Panc1 (cell line): ENCODE measurements at regions of chr11 and their contacts with region 1.

Region 1: GRCh38 chr11:72598906-72599305 is 75.3 kb downstream of the PDE2A start:
- DNase-seq: no peak
- ATAC-seq: peak; percentile 89
- H3K4me3 ChIP-seq: no peak overlapping the region
- H3K27ac ChIP-seq: no peak overlapping the region
- H3K4me1 ChIP-seq: no peaks in the 10 kb centered on the region
- H3K27me3 ChIP-seq: no peaks in the 10 kb centered on the region
- CTCF ChIP-seq: peak; percentile 87

Region 2: DNA sequence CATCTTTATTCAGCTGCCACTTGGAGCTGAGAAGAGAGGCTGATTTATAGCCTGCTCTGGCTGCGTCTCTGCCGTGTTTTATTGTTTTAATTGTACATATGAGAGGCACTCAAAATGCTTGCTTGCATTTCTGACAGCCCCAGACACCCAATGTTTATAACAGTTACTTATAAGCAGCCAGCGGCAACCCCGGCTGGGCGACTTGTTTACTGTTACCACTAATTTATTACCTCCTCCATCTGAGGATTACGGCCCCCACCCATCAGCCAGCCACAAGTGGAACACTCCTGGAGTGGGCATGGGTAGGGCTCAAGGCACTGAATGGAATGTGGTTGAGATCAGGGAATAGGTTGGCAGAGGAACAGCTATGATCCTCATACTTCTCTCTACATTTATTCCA is 225.7 kb before region 1 on chr11:
- CTCF ChIA-PET with region 1: interaction called, 11 read pairs
- POLR2A ChIA-PET with region 1: no interaction called
- in situ Hi-C with region 1: no loop called
- intact Hi-C with region 1: no loop called
- DNase-seq: no peak
- ATAC-seq: no peak
- H3K4me3 ChIP-seq: no peak overlapping the region
- H3K27ac ChIP-seq: no peak overlapping the region
- H3K4me1 ChIP-seq: no peaks in the 10 kb centered on the region
- H3K27me3 ChIP-seq: no peaks in the 10 kb centered on the region
- CTCF ChIP-seq: no peak

Region 3: DNA sequence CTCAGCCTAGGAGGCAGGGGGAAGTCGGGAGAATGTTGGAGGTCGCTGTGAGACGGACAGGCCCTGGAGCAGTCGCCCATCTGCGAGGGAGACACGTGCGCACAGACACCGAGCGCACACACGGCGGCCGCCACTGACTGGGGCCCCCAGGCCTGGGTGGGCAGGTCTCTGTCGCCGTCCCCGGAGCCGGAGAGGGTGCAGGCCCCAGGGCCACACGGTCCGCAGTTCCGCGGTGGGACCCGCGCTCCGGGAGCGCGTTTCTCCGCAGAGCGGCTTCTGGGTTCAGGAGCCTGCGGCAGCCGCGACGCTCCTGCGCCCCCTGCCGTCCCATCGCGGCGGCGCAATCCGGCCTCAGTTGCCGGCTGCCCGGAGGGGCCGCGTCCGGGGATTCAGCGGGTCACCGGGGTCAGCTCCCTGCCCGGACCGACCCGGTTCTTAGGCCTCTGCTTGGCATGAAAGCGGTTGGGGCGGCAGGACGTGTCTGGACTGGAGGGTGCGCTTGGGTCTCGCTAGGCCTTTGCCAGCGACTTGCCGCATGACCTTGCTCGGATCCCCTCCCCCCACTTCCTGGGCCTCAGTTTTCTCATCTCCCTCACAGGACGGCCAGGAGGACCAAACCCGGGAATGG is 44.1 kb after region 1 on chr11:
- CTCF ChIA-PET with region 1: interaction called, 11 read pairs
- POLR2A ChIA-PET with region 1: no interaction called
- in situ Hi-C with region 1: no loop called
- intact Hi-C with region 1: loop called (anchors 2 kb)
- DNase-seq: peak; percentile 48
- ATAC-seq: peak; percentile 85
- H3K4me3 ChIP-seq: peak overlapping the region; percentile 37 to 50
- H3K27ac ChIP-seq: peak overlapping the region; percentile 40
- H3K4me1 ChIP-seq: peaks cover 6% of the 10 kb centered on the region; the same call in 1 of the 2 replicates
- H3K27me3 ChIP-seq: peaks cover 13% of the 10 kb centered on the region
- CTCF ChIP-seq: peak; percentile 99

Region 4: DNA sequence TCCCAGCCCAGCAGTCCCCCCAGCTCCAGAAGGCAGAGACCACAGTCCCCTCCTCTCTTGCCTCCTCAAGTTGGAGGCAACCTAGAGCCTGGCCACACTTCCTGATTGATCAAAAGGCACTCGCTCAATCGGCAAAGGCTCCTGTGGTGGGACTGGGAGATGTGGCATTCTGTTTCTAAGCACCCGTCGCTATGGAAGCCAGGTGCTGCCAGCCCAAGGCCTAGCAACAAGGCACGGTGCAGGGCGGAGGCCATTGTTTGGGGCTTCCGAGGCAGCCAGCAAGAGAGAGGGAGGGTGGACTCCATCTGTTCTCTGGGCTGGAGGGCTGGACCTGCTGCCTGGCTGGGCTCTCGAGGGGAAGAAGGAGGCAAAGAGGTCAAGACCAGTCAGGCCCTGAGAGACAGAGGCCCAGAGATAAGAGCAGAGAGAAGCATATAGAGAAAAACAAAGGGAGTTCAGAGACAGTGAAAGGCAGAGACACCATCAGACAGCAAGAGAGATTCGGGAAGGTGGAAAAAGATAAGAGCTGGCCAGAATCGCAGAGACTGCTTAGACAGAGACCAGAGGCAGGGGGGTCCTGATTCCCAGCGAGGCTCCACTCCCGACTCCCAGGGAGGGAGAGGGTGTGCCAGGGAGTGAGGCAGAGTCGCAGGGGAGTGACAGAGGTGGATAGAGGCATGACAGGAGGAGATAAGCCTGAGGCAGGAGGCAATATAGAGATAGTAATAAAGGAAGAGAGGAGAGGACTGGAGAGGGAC is 54.1 kb after region 1 on chr11:
- CTCF ChIA-PET with region 1: no interaction called
- POLR2A ChIA-PET with region 1: interaction called, 12 read pairs
- in situ Hi-C with region 1: no loop called
- intact Hi-C with region 1: no loop called
- DNase-seq: no peak
- ATAC-seq: no peak
- H3K4me3 ChIP-seq: no peak overlapping the region
- H3K27ac ChIP-seq: no peak overlapping the region
- H3K4me1 ChIP-seq: no peaks in the 10 kb centered on the region
- H3K27me3 ChIP-seq: no peaks in the 10 kb centered on the region
- CTCF ChIP-seq: no peak

Region 5: GRCh38 chr11:72683782-72684200 is 84.9 kb after region 1 on chr11:
- CTCF ChIA-PET with region 1: interaction called, 29 read pairs
- POLR2A ChIA-PET with region 1: no interaction called
- in situ Hi-C with region 1: no loop called
- intact Hi-C with region 1: no loop called
- DNase-seq: peak; percentile 52
- ATAC-seq: peak; percentile 73
- H3K4me3 ChIP-seq: no peak overlapping the region
- H3K27ac ChIP-seq: no peak overlapping the region
- H3K4me1 ChIP-seq: peaks cover 18% of the 10 kb centered on the region
- H3K27me3 ChIP-seq: peaks cover 6% of the 10 kb centered on the region
- CTCF ChIP-seq: peak; percentile 98

Region 6: GRCh38 chr11:73647459-73648100 is 1048.7 kb after region 1 on chr11:
- CTCF ChIA-PET with region 1: interaction called, 11 read pairs
- POLR2A ChIA-PET with region 1: no interaction called
- in situ Hi-C with region 1: no loop called
- intact Hi-C with region 1: no loop called
- DNase-seq: peak; percentile 22
- ATAC-seq: peak; percentile 97
- H3K4me3 ChIP-seq: peak overlapping the region; percentile 29 to 52
- H3K27ac ChIP-seq: peak overlapping the region; percentile 13; the same call in 1 of the 2 replicates
- H3K4me1 ChIP-seq: no peaks in the 10 kb centered on the region; the same call in 1 of the 2 replicates
- H3K27me3 ChIP-seq: no peaks in the 10 kb centered on the region
- CTCF ChIP-seq: no peak